Heart left ventricle (tissue), 16 donors: ENCODE measurements at regions of chr3 and their contacts with region 1.

Region 1: GRCh38 chr3:173395412-173396181 is 1.9 kb upstream of the NLGN1 start:
- DNase-seq: peak; percentile 85 to 94 (median 91)
- ATAC-seq: peak; percentile 92 to 94 (median 94)
- H3K4me3 ChIP-seq: peak overlapping the region; percentile 51 to 81 (median 68)
- H3K27ac ChIP-seq: peak overlapping the region; percentile 11 to 91 (median 88)
- H3K4me1 ChIP-seq: peaks cover 0 to 34% (median 6%) of the 10 kb centered on the region in 12 donors
- H3K27me3 ChIP-seq: peaks cover 0 to 42% (median 0%) of the 10 kb centered on the region in 9 donors
- CTCF ChIP-seq: peak in 2 of 12 donors; percentile 16 to 24
- POLR2A ChIP-seq: peak in 1 of 2 donors; percentile 76

Region 2: DNA sequence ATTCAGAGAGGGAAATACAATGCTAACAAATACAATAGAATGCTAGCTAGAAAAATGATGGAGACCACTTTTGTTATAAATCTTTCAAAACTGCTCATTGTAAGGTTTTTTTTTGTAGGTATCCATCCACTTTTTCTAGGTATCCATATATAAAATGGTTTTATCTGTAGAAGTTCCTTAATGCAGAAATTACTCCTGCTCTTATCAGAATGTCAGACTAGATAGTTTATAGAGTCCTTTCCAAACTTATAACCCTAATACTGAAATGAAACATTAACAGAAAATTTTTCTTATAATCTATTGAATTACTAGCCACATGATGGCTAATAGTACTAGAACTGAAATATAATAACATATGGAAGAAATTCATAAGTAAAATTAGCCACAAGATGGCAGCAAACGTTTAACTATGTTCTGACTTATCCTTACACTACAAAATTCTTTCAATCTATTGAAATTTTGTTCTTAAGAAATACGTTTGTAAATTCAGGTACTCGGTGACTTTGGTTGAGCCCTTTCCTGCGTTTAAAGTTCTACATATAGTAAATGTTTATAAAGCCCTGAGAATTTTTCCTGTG is 586.5 kb before region 1 on chr3:
- intact Hi-C with region 1: loop called in 5 of 10 experiments (anchors 5 to 10 kb)
- DNase-seq: no peak
- ATAC-seq: no peak
- H3K4me3 ChIP-seq: no peak overlapping the region
- H3K27ac ChIP-seq: no peak overlapping the region
- H3K4me1 ChIP-seq: no peaks in the 10 kb centered on the region
- H3K27me3 ChIP-seq: no peaks in the 10 kb centered on the region
- CTCF ChIP-seq: peak in 11 of 12 donors; percentile 24 to 63 (median 48)
- POLR2A ChIP-seq: no peak

Region 3: DNA sequence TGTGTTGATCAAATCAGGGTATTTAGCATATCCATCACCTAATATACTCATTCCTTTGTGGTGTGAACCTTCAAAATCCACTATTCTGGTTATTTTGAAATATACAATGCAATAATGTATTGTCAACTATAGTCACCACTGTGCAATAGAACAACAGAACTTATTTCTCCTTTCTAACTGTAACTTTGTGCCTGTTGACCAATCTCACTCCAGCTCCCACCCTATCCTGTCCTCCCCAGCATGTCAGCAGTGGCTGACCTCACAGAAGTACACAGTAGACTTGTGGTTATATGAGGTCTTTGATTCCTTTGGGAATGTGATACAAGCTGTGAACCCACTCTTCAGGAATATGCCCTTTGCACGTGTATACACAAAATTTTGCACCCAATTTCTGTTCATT is 580.9 kb before region 1 on chr3:
- intact Hi-C with region 1: loop called in 6 of 10 experiments (anchors 5 to 10 kb)
- DNase-seq: no peak
- ATAC-seq: no peak
- H3K4me3 ChIP-seq: no peak overlapping the region
- H3K27ac ChIP-seq: peak overlapping the region in 5 of 12 donors; percentile 55 to 73 (median 69)
- H3K4me1 ChIP-seq: peaks cover 0 to 13% (median 0%) of the 10 kb centered on the region in 12 donors
- H3K27me3 ChIP-seq: no peaks in the 10 kb centered on the region
- CTCF ChIP-seq: no peak
- POLR2A ChIP-seq: no peak

Region 4: GRCh38 chr3:172982736-172983364 is 412.7 kb before region 1 on chr3:
- intact Hi-C with region 1: loop called in 3 of 10 experiments (anchors 5 to 10 kb)
- DNase-seq: no peak
- ATAC-seq: peak; percentile 42 to 70 (median 60)
- H3K4me3 ChIP-seq: peak overlapping the region in 4 of 12 donors; percentile 11 to 28 (median 20)
- H3K27ac ChIP-seq: peak overlapping the region in 2 of 12 donors; percentile 13 to 65
- H3K4me1 ChIP-seq: peaks cover 0 to 9% (median 0%) of the 10 kb centered on the region in 12 donors
- H3K27me3 ChIP-seq: no peaks in the 10 kb centered on the region
- CTCF ChIP-seq: peak in 10 of 12 donors; percentile 14 to 47 (median 30)
- POLR2A ChIP-seq: no peak

Region 5: GRCh38 chr3:173584093-173584837 is 188.7 kb after region 1 on chr3:
- intact Hi-C with region 1: no loop called
- DNase-seq: no peak
- ATAC-seq: peak in 1 of 4 donors; percentile 49
- H3K4me3 ChIP-seq: peak overlapping the region in 11 of 12 donors; percentile 35 to 65 (median 57)
- H3K27ac ChIP-seq: no peak overlapping the region
- H3K4me1 ChIP-seq: peaks cover 0 to 13% (median 0%) of the 10 kb centered on the region in 12 donors
- H3K27me3 ChIP-seq: peaks cover 0 to 9% (median 0%) of the 10 kb centered on the region in 9 donors
- CTCF ChIP-seq: peak; percentile 47 to 69 (median 62)
- POLR2A ChIP-seq: no peak

Region 6: DNA sequence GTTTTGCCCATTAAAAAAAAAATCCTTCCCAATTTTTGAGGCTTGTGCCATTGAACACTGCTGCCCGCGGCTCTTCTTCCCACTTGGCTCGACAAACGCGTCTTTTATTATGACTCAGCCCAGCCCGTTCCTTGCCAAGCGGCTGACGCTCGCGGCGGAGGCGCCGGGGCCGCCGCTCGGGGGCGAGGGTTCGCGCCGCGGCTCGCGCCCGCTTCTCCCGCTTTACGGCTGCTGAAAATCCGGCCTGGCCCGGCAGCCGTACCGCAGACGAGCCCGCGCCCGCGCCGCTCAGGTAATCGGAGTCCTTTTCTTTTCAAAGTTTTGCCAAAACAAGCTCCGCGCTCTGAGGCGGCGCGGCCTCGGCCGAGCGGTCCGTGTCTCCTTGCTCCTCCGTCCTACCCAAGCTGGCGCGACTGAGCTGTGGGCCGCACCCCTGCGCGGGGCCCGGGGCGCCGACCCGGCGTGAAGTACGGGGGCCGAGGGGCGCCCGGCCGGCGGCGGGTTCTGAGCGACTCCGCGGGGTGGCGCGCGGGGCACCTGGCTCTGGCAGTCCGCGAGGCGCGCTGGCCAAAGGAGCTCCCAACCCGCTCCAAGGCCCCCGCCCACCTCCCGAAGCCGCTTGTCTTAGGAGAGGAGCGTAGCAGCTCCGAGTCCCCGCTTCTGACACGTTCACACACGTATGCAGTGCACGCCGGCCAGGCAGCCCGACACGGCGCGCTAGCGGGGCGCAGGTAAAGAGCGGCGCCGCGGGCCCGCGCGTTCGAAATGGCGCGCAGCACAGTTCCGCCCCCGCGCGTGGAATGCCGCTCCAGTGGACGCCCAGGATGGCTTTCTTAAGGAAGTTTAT is 1045.4 kb after region 1 on chr3:
- intact Hi-C with region 1: loop called in 1 of 10 experiments (anchors 5 kb)
- DNase-seq: peak; percentile 85 to 90 (median 89)
- ATAC-seq: peak; percentile 68 to 93 (median 84)
- H3K4me3 ChIP-seq: peak overlapping the region; percentile 65 to 84 (median 74)
- H3K27ac ChIP-seq: peak overlapping the region; percentile 88 to 98 (median 96)
- H3K4me1 ChIP-seq: peaks cover 0 to 29% (median 9%) of the 10 kb centered on the region in 12 donors
- H3K27me3 ChIP-seq: no peaks in the 10 kb centered on the region
- CTCF ChIP-seq: peak in 2 of 12 donors; percentile 25 to 30
- POLR2A ChIP-seq: no peak